Activated CD4-positive, alpha-beta memory T cell treated with anti-CD3 and anti-CD28 coated beads for 36 hours (primary cell): ENCODE measurements at regions of chr10 and their contacts with region 1.

Region 1: DNA sequence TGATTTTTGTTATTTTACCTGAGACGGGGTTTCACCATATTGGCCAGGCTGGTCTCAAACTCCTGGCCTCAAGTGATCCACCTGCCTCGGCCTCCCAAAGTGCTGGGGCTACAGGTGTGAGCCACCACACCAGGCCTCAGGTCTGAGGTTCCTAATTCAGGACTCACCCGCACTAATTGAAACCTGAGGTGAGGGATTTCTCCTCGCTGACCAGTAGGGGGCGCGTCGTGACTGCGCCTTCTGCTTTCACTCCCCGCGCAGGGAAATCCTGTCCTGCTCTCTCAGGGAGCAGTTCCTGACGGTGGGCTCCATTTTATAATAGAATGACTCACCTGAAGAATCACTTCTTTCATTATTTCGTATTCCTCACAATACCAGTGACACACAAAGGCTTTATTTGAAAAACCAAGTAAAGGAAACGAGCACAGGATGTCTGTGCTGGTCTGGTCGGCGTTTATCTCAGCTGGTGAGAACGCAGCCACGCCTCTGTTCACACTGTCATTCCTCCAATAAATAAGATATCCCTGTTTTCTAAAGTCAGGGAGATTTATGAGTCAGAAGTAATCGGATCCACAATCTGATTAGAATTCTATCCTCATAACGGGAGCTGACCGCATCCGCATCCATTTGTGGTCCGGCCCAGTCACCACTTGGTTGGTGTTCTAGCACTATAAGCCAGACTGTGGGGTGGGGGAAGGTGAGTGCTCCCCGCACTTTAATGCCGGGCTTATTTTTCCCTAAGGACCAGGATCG is 35.4 kb downstream of the BAG3 start:
- DNase-seq: peak; percentile 90
- H3K4me3 Mint-ChIP-seq: peak overlapping the region; percentile 25
- H3K27ac Mint-ChIP-seq: peak overlapping the region; percentile 30
- H3K4me1 Mint-ChIP-seq: peaks cover 21% of the 10 kb centered on the region
- H3K27me3 Mint-ChIP-seq: no peaks in the 10 kb centered on the region

Region 2: DNA sequence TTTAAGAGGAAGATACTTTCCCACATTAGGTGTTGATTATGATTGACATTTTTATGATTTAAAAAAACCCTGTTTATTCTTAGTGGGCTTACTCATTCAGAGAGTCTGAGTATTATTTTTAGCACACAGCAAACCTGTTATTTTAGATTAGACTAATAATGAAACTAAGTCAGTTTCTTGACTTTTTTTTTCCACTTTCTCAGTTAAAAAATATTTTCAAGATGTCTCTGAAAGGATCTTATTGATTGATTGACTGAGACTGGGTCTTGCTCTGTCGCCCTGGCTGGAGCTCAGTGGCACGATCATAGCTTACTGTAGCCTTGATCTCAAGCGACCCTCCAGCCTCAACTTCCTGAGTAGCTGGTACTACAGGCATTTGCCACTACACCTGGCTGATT is 18.8 kb after region 1 on chr10:
- CTCF ChIA-PET with region 1: interaction called, 10 read pairs
- POLR2A ChIA-PET with region 1: interaction called, 3 read pairs
- intact Hi-C with region 1: loop called (anchors 1 kb)
- DNase-seq: peak; percentile 51
- H3K4me3 Mint-ChIP-seq: peak overlapping the region; percentile 55
- H3K27ac Mint-ChIP-seq: peak overlapping the region; percentile 92
- H3K4me1 Mint-ChIP-seq: peaks cover 79% of the 10 kb centered on the region
- H3K27me3 Mint-ChIP-seq: no peaks in the 10 kb centered on the region

Region 3: DNA sequence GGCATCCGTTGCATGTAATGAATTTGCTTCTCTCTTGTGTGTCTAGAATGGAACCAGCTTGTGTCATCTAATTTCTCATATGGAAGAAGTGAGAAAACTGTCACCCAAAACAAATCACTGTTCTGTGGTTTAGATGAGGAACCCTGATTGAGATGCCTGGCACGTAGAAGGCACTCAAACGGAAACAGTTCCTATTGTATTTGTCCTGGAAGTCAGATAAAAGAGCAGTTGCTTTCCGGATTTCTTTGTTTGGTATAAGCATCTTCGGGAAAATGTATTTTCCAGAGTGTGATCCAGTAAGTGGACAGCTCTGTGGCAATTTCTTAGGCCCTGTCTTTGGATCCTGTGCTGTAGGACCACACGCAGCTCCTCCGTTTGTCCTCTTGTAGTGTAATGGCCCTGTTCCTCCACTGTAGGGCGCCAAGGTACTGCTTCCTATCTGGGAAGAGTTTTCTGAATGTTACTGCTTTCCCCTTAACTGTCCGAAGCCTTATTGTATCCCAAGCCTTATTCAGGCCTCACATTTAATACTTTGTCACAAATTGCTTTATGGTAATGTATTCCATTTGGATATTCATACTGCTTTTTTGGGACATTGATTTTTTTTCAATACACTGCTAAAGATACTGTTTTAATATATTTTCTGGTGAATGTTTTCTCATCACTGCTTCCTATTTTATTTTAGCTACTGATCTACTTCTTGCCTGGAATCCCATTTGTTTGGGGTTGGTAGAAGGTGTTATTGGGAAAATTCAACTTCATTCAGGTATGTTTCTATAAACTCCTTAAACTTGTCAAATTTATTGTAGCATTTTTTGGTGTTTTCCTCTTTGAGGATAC is 64.0 kb after region 1 on chr10:
- CTCF ChIA-PET with region 1: interaction called, 28 read pairs
- POLR2A ChIA-PET with region 1: no interaction called
- intact Hi-C with region 1: loop called (anchors 1 kb)
- DNase-seq: peak; percentile 70
- H3K4me3 Mint-ChIP-seq: no peak overlapping the region
- H3K27ac Mint-ChIP-seq: no peak overlapping the region
- H3K4me1 Mint-ChIP-seq: peaks cover 12% of the 10 kb centered on the region
- H3K27me3 Mint-ChIP-seq: no peaks in the 10 kb centered on the region

Region 4: DNA sequence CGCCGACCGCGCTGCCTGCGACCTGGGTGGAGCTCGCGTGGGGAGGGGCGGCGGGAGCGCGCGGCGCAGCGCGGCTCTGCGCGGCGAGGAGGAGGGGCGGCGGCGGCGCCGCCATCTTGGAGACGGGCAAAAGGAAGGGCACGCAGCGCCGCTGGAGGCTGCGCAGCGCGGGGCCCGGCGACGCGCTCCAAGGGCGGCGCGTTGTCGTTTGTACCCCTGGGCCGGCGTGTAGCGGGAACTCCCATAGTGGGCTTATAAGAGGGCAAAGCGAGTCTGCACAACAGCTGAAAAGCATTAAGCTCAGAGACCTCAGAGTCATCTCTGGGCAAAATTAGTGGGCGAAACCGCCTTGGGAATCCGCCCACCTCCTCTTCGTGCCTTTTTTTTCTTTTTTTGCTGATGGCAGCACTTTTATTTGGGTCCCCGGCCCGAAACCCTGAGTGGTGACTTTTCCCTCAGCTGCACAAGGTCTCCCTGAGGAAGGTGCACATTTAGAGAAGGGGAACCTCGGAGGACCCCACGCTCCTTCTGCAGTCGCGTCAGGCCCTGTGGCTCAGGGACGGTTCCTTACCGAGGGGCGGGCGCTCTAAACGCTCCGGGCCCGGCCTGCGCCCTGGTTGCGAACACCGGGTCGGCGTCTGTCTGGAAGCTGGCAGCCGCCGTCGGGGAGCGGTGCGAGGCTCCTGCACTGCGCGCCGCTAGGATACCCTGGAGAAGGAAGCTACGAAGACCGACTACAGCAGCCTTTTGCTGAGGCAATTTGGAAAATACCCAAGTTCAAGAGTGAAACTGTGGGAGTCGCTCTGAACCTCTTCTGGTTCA is 186.5 kb after region 1 on chr10:
- CTCF ChIA-PET with region 1: interaction called, 11 read pairs
- POLR2A ChIA-PET with region 1: no interaction called
- intact Hi-C with region 1: no loop called
- DNase-seq: peak; percentile 91
- H3K4me3 Mint-ChIP-seq: peak overlapping the region; percentile 80
- H3K27ac Mint-ChIP-seq: peak overlapping the region; percentile 87
- H3K4me1 Mint-ChIP-seq: peaks cover 31% of the 10 kb centered on the region
- H3K27me3 Mint-ChIP-seq: no peaks in the 10 kb centered on the region

Region 5: GRCh38 chr10:120336911-120337540 is 650.4 kb after region 1 on chr10:
- CTCF ChIA-PET with region 1: interaction called, 6 read pairs
- POLR2A ChIA-PET with region 1: no interaction called
- intact Hi-C with region 1: loop called (anchors 2 kb)
- DNase-seq: peak; percentile 72
- H3K4me3 Mint-ChIP-seq: no peak overlapping the region
- H3K27ac Mint-ChIP-seq: no peak overlapping the region
- H3K4me1 Mint-ChIP-seq: no peaks in the 10 kb centered on the region
- H3K27me3 Mint-ChIP-seq: peaks cover 13% of the 10 kb centered on the region